Ovary (tissue), 10 donors: ENCODE measurements at regions of chr5 and their contacts with region 1.

Region 1: GRCh38 chr5:66814146-66814991 is 218.2 kb downstream of the MAST4 start:
- DNase-seq: peak in 1 of 5 donors; percentile 29
- H3K4me3 ChIP-seq: no peak overlapping the region
- H3K27ac ChIP-seq: no peak overlapping the region
- H3K4me1 ChIP-seq: peaks cover 1% of the 10 kb centered on the region
- H3K27me3 ChIP-seq: no peaks in the 10 kb centered on the region
- CTCF ChIP-seq: peak; percentile 18 to 47 (median 37)
- EP300 ChIP-seq: no peak
- POLR2A ChIP-seq: no peak

Region 2: DNA sequence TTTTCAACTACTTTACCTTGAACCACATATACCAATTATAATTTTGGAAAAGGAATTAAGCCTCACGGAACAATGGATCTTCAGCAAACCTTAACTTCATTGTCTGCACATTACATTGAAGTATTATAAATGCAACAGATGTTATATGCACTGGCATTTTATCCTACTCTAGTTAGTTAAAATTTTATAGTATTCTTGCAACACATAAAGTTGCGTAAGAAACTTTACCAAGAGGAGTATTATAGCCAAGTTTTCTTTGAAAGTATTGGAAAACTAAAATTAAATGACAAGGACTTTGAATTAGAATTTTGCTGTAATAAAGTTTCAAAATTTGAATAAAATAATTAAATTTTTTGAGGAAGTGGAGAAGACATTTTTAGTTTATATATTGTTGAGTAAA is 733.7 kb before region 1 on chr5:
- intact Hi-C with region 1: no loop called
- DNase-seq: no peak
- H3K4me3 ChIP-seq: no peak overlapping the region
- H3K27ac ChIP-seq: no peak overlapping the region
- H3K4me1 ChIP-seq: no peaks in the 10 kb centered on the region
- H3K27me3 ChIP-seq: no peaks in the 10 kb centered on the region
- CTCF ChIP-seq: no peak
- EP300 ChIP-seq: no peak
- POLR2A ChIP-seq: no peak

Region 3: GRCh38 chr5:67142816-67143215 is 328.4 kb after region 1 on chr5:
- intact Hi-C with region 1: loop called in 2 of 4 experiments (anchors 5 to 10 kb)
- DNase-seq: no peak
- H3K4me3 ChIP-seq: no peak overlapping the region
- H3K27ac ChIP-seq: no peak overlapping the region
- H3K4me1 ChIP-seq: no peaks in the 10 kb centered on the region
- H3K27me3 ChIP-seq: no peaks in the 10 kb centered on the region
- CTCF ChIP-seq: no peak
- EP300 ChIP-seq: no peak
- POLR2A ChIP-seq: no peak

Region 4: GRCh38 chr5:67149951-67150523 is 335.7 kb after region 1 on chr5:
- intact Hi-C with region 1: loop called in 3 of 4 experiments (anchors 10 kb)
- DNase-seq: no peak
- H3K4me3 ChIP-seq: peak overlapping the region; percentile 8
- H3K27ac ChIP-seq: no peak overlapping the region
- H3K4me1 ChIP-seq: peaks cover 4% of the 10 kb centered on the region
- H3K27me3 ChIP-seq: no peaks in the 10 kb centered on the region
- CTCF ChIP-seq: peak; percentile 18 to 53 (median 39)
- EP300 ChIP-seq: no peak
- POLR2A ChIP-seq: no peak

Region 5: GRCh38 chr5:67156976-67157583 is 342.7 kb after region 1 on chr5:
- intact Hi-C with region 1: loop called in 2 of 4 experiments (anchors 10 kb)
- DNase-seq: no peak
- H3K4me3 ChIP-seq: no peak overlapping the region
- H3K27ac ChIP-seq: no peak overlapping the region
- H3K4me1 ChIP-seq: no peaks in the 10 kb centered on the region
- H3K27me3 ChIP-seq: no peaks in the 10 kb centered on the region
- CTCF ChIP-seq: peak in 1 of 3 donors; percentile 45
- EP300 ChIP-seq: no peak
- POLR2A ChIP-seq: no peak

Region 6: GRCh38 chr5:67196537-67197059 is 382.2 kb after region 1 on chr5 and contains the start of gene CD180:
- intact Hi-C with region 1: loop called in 2 of 4 experiments (anchors 10 kb)
- DNase-seq: no peak
- H3K4me3 ChIP-seq: no peak within 1 kb of the TSS
- H3K27ac ChIP-seq: no peak within 1 kb of the TSS
- H3K4me1 ChIP-seq: peaks cover 3% of the 10 kb centered on the region
- H3K27me3 ChIP-seq: no peaks in the 10 kb centered on the region
- CTCF ChIP-seq: no peak
- EP300 ChIP-seq: no peak
- POLR2A ChIP-seq: no peak
- total RNA-seq, gene CD180: 0.15 to 1.0 (median 0.30) TPM

Region 7: DNA sequence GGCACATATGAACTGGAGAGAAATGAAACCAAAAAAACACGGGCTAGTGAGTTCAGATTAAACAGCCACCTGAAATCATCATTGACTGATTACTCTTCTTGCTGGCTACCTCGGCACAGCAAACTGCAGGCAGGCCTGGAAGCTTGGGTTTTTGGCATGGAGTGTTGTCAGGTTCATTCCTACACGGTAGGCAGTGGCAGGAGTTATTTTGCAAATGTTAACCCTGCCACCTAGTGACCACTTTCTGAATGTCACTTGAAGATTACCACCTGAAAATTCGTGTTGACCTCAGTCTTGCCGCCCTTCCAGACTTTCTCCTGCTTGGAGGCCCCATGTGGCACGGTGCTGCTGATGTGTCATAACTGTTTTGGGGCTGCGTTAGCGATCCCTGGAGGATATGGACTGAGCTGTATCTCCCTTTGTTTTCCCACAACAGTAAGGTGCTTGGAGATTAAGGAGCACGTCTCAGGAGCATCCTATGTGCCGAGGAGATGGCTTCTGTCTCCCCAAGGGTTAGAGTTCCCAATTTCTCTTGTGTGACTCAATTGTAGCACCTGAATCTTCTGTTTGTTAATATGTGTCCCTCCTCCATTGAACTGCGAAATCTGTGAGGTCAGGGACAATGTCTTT is 394.9 kb after region 1 on chr5:
- intact Hi-C with region 1: loop called in 1 of 4 experiments (anchors 10 kb)
- DNase-seq: peak; percentile 48 to 62 (median 55)
- H3K4me3 ChIP-seq: no peak overlapping the region
- H3K27ac ChIP-seq: no peak overlapping the region
- H3K4me1 ChIP-seq: peaks cover 1% of the 10 kb centered on the region
- H3K27me3 ChIP-seq: no peaks in the 10 kb centered on the region
- CTCF ChIP-seq: peak; percentile 45 to 83 (median 76)
- EP300 ChIP-seq: no peak
- POLR2A ChIP-seq: no peak